Activated CD8-positive, alpha-beta T cell treated with anti-CD3 and anti-CD28 coated beads for 36 hours (primary cell): ENCODE measurements at regions of chr3 and their contacts with region 1.

Region 1: DNA sequence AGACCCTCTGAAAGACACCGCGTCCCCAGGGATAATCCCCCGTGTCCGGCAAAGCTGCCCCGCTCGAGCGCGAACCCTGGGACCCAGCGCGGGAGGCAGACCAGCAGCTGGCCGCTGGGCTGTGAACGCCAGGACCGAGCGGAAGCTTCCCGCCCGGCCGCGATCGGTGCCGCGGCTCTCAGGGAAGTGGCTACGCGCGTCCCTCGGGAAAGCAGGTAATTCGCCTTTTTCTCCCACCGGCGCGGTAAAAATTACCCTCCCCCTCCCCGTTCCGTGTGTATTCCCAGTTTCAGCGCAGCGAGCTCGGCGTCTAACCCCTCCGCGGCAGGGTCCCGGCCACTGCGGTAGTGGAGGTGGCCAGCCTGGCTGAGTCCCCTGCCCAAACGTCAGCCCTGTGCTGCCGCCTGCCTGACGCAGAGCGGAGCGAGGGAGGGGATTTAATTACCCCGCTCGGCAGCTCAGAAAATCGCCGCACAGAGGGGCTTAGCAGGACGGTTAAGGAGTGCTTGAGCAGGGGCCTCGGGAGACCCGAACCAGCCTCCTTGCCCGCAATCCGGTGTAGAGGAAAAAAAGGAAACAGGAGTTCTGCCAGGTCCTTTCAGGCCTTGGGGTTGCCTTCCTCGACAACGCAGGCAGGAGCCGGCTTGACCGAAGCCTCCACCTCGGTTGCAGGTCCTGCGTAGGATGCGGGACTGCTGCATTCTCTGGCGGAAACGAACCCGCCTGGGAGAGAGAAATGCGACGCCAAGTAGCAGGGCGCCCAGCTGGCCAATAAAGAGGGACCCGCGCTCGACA is 2.9 kb downstream of the GATA2 start:
- DNase-seq: no peak
- ATAC-seq: no peak
- H3K4me3 Mint-ChIP-seq: peak overlapping the region; percentile 56
- H3K27ac Mint-ChIP-seq: no peak overlapping the region
- H3K4me1 Mint-ChIP-seq: peaks cover 25% of the 10 kb centered on the region
- H3K27me3 Mint-ChIP-seq: peaks cover 64% of the 10 kb centered on the region
- CTCF ChIP-seq: no peak

Region 2: DNA sequence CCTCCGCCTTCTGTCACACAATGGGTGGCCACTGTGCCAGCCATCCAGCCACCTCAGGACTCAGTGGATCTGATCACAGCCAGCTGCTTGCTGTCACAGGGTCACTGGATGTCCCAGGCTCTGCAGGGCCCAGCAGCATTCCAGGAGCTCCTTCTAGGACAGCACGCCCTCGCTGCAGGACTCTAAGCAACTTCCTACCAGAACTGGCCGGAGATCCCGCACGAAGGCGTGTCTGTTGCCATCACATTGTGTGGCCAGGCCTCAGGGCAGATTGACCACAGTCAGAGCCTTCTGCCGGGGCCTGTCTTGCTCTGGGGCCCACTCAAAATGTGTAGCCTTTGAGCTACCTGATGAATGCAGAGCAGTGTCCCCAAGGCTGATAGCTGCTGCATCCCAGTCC is 48.0 kb before region 1 on chr3:
- CTCF ChIA-PET with region 1: no interaction called
- POLR2A ChIA-PET with region 1: no interaction called
- intact Hi-C with region 1: loop called (anchors 5 kb)
- DNase-seq: no peak
- ATAC-seq: no peak
- H3K4me3 Mint-ChIP-seq: no peak overlapping the region
- H3K27ac Mint-ChIP-seq: no peak overlapping the region
- H3K4me1 Mint-ChIP-seq: peaks cover 2% of the 10 kb centered on the region
- H3K27me3 Mint-ChIP-seq: peaks cover 6% of the 10 kb centered on the region
- CTCF ChIP-seq: no peak